GM10248 (cell line): ENCODE measurements at regions of chr6 and their contacts with region 1.

Region 1: GRCh38 chr6:166313255-166314070 is 5.3 kb upstream of the PRR18 start:
- DNase-seq: peak; percentile 79
- CTCF ChIP-seq: peak; percentile 79

Region 2: GRCh38 chr6:166275714-166276166 is 37.7 kb before region 1 on chr6:
- CTCF ChIA-PET with region 1: interaction called, 34 read pairs
- POLR2A ChIA-PET with region 1: no interaction called
- DNase-seq: peak; percentile 88
- CTCF ChIP-seq: peak; percentile 100

Region 3: GRCh38 chr6:166281104-166281503 is 32.4 kb before region 1 on chr6:
- CTCF ChIA-PET with region 1: interaction called, 34 read pairs
- POLR2A ChIA-PET with region 1: no interaction called
- DNase-seq: no peak
- CTCF ChIP-seq: no peak

Region 4: GRCh38 chr6:166297606-166298005 is 15.9 kb before region 1 on chr6:
- CTCF ChIA-PET with region 1: interaction called, 22 read pairs
- POLR2A ChIA-PET with region 1: no interaction called
- DNase-seq: no peak
- CTCF ChIP-seq: no peak

Region 5: DNA sequence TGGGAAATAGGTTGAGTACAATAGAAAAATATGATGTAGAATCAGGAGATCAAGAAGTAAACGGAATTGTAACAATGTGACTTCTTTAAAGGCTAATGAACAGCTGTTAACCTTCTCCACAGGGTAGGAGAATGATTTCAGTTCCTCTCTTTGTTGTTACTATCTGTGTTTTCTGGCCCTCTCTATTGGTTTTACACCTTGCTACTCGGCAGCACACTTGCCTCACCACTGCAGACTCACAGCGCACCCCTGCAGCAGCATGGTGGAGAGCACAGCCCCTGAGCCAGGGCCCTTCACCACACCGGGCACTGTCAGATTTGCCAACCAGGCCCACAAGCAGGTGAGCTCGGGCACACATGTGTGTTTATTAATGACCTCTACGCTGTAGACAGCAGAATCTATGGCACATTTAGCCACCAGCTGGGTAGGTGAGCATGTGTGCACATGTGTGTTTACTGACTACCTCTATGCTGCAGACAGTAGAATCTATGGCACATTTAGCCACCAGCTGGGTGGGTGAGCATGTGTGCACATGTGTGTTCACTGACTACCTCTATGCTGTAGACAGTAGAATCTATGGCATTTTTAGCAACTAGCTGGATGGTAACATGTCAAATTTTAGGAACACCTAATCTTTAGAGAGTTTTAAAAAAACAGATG is 12.1 kb after region 1 on chr6:
- CTCF ChIA-PET with region 1: interaction called, 41 read pairs
- POLR2A ChIA-PET with region 1: interaction called, 3 read pairs
- DNase-seq: peak; percentile 52
- CTCF ChIP-seq: no peak

Region 6: GRCh38 chr6:166333172-166333995 is 19.9 kb after region 1 on chr6:
- CTCF ChIA-PET with region 1: interaction called, 10 read pairs
- POLR2A ChIA-PET with region 1: no interaction called
- DNase-seq: peak; percentile 79
- CTCF ChIP-seq: no peak

Region 7: DNA sequence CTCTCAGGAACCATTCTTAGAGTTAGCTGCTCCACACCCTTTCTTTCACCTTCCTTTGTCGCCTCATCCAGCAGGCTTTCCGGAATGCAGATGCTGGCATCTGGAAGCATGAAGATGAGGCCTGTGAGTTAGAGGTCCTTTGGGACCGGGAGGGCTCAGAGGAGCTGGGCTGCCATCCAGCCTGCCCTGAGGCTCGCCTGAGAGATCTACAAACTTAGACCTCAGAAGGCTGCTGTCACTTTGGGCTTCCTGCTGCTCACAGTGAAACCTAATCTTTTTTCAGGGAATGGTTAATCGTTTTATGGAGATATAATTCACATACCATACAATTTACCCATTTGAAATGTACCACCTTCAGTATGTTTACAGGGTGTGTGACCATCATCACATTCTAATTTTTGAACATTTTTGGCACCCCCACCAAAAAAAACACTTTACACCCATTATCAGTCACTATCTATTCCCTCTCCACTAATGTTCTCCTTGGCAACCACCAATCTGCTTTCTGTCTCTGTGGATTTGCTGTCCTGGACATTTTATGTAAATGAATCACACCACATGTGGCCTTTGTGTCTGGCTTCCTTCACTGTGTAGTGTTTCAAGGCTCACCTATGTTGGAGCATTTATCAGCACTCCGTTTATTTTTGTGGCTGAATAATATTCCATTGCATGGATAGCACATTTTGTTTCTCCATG is 89.3 kb after region 1 on chr6:
- CTCF ChIA-PET with region 1: interaction called, 113 read pairs
- POLR2A ChIA-PET with region 1: no interaction called
- DNase-seq: no peak
- CTCF ChIP-seq: no peak